Endothelial cell of umbilical vein (primary cell): ENCODE measurements at regions of chr1 and their contacts with region 1.

Region 1: DNA sequence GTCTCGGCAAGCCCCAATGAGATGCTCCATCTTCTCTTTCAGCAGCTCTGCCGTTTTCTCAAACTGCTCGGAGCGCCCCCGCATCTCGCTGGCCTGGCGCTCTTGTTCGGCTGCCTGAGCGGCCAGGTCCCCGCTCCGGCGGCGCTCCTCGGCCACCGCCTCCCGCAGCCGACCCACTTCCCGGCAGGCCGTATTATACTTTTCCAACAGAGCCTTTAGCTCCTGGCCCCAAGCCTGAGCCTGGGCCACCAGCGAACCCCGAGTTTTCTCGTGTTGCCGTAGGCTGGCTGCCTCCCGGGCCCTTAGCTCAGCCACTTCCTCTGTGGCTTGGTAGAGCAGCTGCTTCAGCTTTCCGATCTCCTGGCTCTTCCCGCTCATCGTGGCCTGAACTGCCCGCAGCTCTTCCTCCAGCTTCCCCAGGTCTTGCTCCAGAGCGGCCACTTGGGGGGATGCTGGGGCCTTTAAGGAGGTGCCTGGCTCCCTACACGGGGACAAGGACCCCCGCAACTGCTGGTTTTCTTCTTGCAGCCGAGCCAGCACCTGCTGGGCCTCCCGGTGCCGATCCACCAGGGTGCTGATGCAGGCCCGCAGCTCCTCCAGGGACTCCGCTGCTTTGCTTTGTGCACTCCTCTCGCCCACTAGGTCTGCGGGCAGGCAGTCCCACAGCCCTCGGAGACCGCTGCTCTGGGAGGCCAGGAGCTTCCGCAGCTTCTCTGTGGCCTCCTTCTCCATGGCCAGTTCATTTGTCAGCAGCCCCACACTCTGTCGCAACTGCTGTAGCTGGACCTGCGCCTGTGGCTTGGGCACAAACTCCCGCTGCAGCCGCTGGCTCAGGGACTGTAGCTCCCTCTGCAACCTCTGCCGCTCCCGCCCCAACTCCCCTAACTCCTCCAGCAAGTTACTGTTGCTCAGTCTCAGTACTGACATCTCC is 13.4 kb upstream of the PIAS3 start:
- DNase-seq: peak; percentile 37
- H3K4me3 ChIP-seq: peak overlapping the region in 1 of 3 experiments; percentile 35
- H3K27ac ChIP-seq: no peak overlapping the region
- H3K4me1 ChIP-seq: peaks cover 8% of the 10 kb centered on the region
- H3K27me3 ChIP-seq: peaks cover 0 to 3% of the 10 kb centered on the region in 2 experiments
- CTCF ChIP-seq: no peak
- POLR2A ChIP-seq: no peak

Region 2: GRCh38 chr1:145827966-145828692 is 44.1 kb before region 1 on chr1:
- CTCF ChIA-PET with region 1: no interaction called
- POLR2A ChIA-PET with region 1: no interaction called
- dilution Hi-C with region 1: no loop called
- intact Hi-C with region 1: no loop called
- DNase-seq: peak; percentile 50
- H3K4me3 ChIP-seq: no peak overlapping the region
- H3K27ac ChIP-seq: no peak overlapping the region
- H3K4me1 ChIP-seq: peaks cover 13% of the 10 kb centered on the region
- H3K27me3 ChIP-seq: no peaks in the 10 kb centered on the region
- CTCF ChIP-seq: no peak
- POLR2A ChIP-seq: no peak

Region 3: DNA sequence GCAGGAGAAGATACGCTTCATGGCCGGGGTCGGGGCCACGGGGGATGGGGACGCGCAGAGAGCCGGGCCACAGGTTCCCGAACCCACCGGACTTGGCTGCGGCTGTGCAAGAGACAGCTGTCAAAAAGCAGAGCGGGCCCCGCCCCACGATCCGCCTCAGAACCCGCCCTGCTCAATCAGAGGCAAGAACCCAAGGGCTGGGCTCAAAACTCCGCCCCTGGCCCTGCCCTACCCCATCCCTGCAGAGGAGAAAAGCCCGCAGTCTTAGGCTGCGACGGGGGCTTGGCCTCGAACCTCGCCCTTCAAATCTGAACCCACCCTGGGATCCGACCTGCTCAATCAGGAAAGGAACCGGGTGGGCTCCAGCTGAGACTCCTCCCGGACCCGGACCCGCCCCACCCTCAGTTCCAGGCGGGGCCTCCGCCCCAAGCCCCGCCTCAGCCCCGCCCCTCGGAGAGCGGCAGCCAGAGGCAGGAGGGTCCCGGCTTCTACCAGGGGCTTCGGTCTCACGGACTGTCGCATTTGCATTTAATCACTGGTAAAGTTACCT is 13.6 kb after region 1 on chr1 and contains the start of gene ANKRD35:
- CTCF ChIA-PET with region 1: interaction called, 22 read pairs
- POLR2A ChIA-PET with region 1: interaction called, 3 read pairs
- dilution Hi-C with region 1: no loop called
- intact Hi-C with region 1: no loop called
- DNase-seq: peak; percentile 80
- H3K4me3 ChIP-seq: peak within 1 kb of the TSS; percentile 64 to 94 (median 68)
- H3K27ac ChIP-seq: no peak within 1 kb of the TSS
- H3K4me1 ChIP-seq: peaks cover 23% of the 10 kb centered on the region
- H3K27me3 ChIP-seq: no peaks in the 10 kb centered on the region
- CTCF ChIP-seq: no peak
- POLR2A ChIP-seq: no peak
- total RNA-seq, gene ANKRD35: 0.14 and 0.20 TPM in 2 replicates

Region 4: GRCh38 chr1:146019231-146020057 is 147.2 kb after region 1 on chr1:
- CTCF ChIA-PET with region 1: no interaction called
- POLR2A ChIA-PET with region 1: no interaction called
- dilution Hi-C with region 1: no loop called
- intact Hi-C with region 1: no loop called
- DNase-seq: no peak
- H3K4me3 ChIP-seq: no peak overlapping the region
- H3K27ac ChIP-seq: no peak overlapping the region
- H3K4me1 ChIP-seq: no peaks in the 10 kb centered on the region
- H3K27me3 ChIP-seq: peaks cover 44 to 55% of the 10 kb centered on the region in 2 experiments
- CTCF ChIP-seq: no peak
- POLR2A ChIP-seq: no peak